Calu3 (cell line): ENCODE measurements at regions of chr3 and their contacts with region 1.

Region 1: DNA sequence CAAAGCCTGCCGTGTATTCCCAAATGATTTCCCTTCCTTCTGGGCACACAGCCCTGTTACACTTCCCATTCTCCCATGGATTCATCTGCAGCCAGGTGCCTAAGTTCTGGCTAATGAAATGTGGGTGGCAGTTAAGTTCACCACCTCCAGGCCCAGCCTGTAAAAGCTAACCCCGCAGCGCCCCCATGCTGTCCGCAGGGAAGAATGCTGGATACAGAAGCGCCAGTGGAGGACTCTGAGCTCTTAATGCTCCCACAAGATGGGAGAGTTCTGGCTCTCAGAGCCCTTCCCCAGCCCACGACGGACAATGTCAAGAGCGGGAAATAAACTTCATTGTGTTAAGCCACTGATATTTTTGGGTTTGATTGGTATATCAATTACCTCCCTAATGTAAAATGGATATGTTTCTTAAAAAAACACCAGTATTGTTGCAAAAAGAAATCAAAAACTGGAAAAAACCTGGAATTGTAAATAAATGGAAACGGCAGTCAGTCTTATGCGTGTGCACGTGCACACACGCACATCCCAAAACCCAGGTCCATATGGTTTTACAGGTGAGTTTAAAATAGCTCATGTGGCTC is 37.7 kb upstream of the FGD5 start:
- DNase-seq: peak; percentile 77
- H3K4me3 Mint-ChIP-seq: no peak overlapping the region
- H3K27ac Mint-ChIP-seq: no peak overlapping the region
- H3K4me1 Mint-ChIP-seq: no peaks in the 10 kb centered on the region
- H3K27me3 Mint-ChIP-seq: peaks cover 37% of the 10 kb centered on the region
- CTCF ChIP-seq: no peak

Region 2: GRCh38 chr3:14672588-14672987 is 108.4 kb before region 1 on chr3:
- CTCF ChIA-PET with region 1: interaction called, 7 read pairs
- intact Hi-C with region 1: loop called (anchors 2 kb)
- DNase-seq: no peak
- H3K4me3 Mint-ChIP-seq: no peak overlapping the region
- H3K27ac Mint-ChIP-seq: no peak overlapping the region
- H3K4me1 Mint-ChIP-seq: no peaks in the 10 kb centered on the region
- H3K27me3 Mint-ChIP-seq: no peaks in the 10 kb centered on the region
- CTCF ChIP-seq: no peak